T-cell (primary cell): ENCODE measurements at regions of chr13 and their contacts with region 1.

Region 1: GRCh38 chr13:32107474-32107873 is 75.9 kb downstream of the FRY start:
- DNase-seq: no peak
- ATAC-seq: no peak
- H3K4me3 ChIP-seq: no peak overlapping the region
- H3K4me3 Mint-ChIP-seq: no peak overlapping the region
- H3K27ac ChIP-seq: no peak overlapping the region
- H3K27ac Mint-ChIP-seq: no peak overlapping the region
- H3K4me1 ChIP-seq: peaks cover 0 to 8% of the 10 kb centered on the region in 2 experiments
- H3K4me1 Mint-ChIP-seq: no peaks in the 10 kb centered on the region
- H3K27me3 ChIP-seq: no peaks in the 10 kb centered on the region
- H3K27me3 Mint-ChIP-seq: no peaks in the 10 kb centered on the region

Region 2: DNA sequence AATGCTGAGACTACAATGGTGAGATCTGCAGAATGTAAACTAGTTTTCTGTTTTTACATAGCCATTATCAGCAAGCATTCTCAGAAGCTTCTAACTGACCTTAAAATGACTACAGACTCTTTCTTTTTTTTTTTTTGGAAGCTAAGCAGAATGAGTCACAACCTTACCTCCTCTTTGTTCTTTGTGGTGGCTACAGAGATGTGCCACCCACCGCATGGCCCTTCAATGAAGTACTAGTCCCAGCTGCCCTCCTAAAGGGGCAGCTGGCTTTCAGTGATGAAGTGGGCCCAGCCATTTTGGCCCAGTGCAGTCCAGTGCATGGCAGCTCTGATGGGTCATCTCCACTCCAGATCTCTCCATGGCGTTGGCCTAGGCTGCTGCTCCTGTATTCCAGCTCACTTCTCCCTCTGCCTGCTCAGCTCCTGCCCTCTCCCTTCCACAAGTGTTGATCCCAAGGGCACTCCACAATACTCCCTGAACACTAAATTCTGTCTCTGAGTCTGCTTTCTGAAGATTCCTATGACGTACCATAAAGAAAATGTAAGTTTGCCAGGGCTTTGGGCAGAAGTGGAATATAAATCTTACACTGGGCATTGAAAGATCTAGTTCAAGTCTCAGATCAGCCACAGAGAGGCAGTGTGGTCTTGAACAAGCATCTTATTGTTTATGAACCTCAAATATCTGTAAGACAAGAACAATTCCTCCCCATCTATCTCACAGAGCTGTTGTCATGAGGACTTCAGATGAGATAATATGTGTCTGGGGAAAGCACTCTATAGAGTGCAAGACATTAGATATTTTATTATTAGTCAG is 282.6 kb before region 1 on chr13:
- CTCF ChIA-PET with region 1: no interaction called
- POLR2A ChIA-PET with region 1: no interaction called
- DNase-seq: peak in 1 of 35 experiments; percentile 23
- ATAC-seq: peak in 2 of 4 experiments; percentile 20 to 63
- H3K4me3 ChIP-seq: no peak overlapping the region
- H3K4me3 Mint-ChIP-seq: no peak overlapping the region
- H3K27ac ChIP-seq: no peak overlapping the region
- H3K27ac Mint-ChIP-seq: peak overlapping the region in 1 of 2 donors; percentile 23
- H3K4me1 ChIP-seq: peaks cover 0 to 3% of the 10 kb centered on the region in 2 experiments
- H3K4me1 Mint-ChIP-seq: peaks cover 0 to 8% (median 3%) of the 10 kb centered on the region in 3 donors
- H3K27me3 ChIP-seq: no peaks in the 10 kb centered on the region
- H3K27me3 Mint-ChIP-seq: peaks cover 1 to 3% of the 10 kb centered on the region in 2 donors

Region 3: GRCh38 chr13:32503727-32504126 is 396.3 kb after region 1 on chr13:
- CTCF ChIA-PET with region 1: interaction called in 1 of 2 experiments, 11 read pairs
- POLR2A ChIA-PET with region 1: no interaction called
- DNase-seq: no peak
- ATAC-seq: no peak
- H3K4me3 ChIP-seq: no peak overlapping the region
- H3K4me3 Mint-ChIP-seq: no peak overlapping the region
- H3K27ac ChIP-seq: no peak overlapping the region
- H3K27ac Mint-ChIP-seq: no peak overlapping the region
- H3K4me1 ChIP-seq: no peaks in the 10 kb centered on the region
- H3K4me1 Mint-ChIP-seq: peaks cover 7 to 24% (median 11%) of the 10 kb centered on the region in 3 donors
- H3K27me3 ChIP-seq: no peaks in the 10 kb centered on the region
- H3K27me3 Mint-ChIP-seq: no peaks in the 10 kb centered on the region